OCI-LY7 (cell line): ENCODE measurements at regions of chr2 and their contacts with region 1.

Region 1: GRCh38 chr2:39728941-39729351 is 50.1 kb downstream of the THUMPD2 start:
- DNase-seq: peak; percentile 59
- H3K4me3 ChIP-seq: no peak overlapping the region
- H3K27ac ChIP-seq: no peak overlapping the region
- H3K4me1 ChIP-seq: no peaks in the 10 kb centered on the region
- CTCF ChIP-seq: peak; percentile 91

Region 2: DNA sequence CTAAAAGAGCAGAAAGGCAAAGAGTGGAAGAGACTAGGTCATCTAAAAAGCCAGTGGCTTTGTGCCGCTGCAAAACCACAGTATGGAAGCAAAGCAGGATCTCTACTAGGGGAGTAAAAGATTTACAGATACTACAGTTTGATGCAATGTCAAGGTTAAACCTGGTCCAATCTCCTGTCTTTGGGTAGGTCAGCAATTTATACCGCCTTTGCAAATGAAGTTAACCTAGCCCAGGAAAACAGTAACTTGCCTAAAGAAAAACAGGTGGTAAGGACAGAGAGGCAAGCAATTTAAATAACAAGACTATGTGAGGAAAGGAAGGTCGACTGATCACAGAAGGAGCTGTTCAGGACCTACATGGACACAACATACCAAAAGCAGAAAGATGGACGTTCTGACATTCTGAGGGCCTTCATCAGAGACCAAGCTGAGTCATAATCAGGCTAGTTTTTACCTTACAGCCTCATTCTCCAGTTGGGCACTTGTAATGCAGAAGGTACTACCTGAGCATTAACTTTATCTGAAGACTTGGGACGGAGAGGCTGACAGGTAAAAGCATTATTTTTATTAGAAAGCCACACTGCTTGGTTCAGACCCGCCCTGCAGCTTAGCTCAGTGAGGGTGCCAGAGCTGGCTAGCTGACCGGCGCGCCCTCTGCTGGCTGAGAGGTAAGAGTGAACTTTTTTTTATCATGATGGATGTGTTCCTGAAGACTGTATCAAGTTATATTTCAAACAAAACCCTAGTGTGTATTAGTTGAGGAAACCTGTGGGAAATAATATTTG is 501.1 kb before region 1 on chr2:
- CTCF ChIA-PET with region 1: no interaction called
- POLR2A ChIA-PET with region 1: no interaction called
- intact Hi-C with region 1: loop called (anchors 1 kb)
- DNase-seq: peak; percentile 69
- H3K4me3 ChIP-seq: peak overlapping the region; percentile 33
- H3K27ac ChIP-seq: no peak overlapping the region
- H3K4me1 ChIP-seq: peaks cover 7% of the 10 kb centered on the region
- CTCF ChIP-seq: peak; percentile 84

Region 3: GRCh38 chr2:39464864-39465263 is 264.1 kb before region 1 on chr2:
- CTCF ChIA-PET with region 1: no interaction called
- POLR2A ChIA-PET with region 1: no interaction called
- intact Hi-C with region 1: no loop called
- DNase-seq: no peak
- H3K4me3 ChIP-seq: no peak overlapping the region
- H3K27ac ChIP-seq: no peak overlapping the region
- H3K4me1 ChIP-seq: peaks cover 14% of the 10 kb centered on the region
- CTCF ChIP-seq: no peak